ENCODE measurements at regions of chr17 and their contacts with region 1.

Region 1: DNA sequence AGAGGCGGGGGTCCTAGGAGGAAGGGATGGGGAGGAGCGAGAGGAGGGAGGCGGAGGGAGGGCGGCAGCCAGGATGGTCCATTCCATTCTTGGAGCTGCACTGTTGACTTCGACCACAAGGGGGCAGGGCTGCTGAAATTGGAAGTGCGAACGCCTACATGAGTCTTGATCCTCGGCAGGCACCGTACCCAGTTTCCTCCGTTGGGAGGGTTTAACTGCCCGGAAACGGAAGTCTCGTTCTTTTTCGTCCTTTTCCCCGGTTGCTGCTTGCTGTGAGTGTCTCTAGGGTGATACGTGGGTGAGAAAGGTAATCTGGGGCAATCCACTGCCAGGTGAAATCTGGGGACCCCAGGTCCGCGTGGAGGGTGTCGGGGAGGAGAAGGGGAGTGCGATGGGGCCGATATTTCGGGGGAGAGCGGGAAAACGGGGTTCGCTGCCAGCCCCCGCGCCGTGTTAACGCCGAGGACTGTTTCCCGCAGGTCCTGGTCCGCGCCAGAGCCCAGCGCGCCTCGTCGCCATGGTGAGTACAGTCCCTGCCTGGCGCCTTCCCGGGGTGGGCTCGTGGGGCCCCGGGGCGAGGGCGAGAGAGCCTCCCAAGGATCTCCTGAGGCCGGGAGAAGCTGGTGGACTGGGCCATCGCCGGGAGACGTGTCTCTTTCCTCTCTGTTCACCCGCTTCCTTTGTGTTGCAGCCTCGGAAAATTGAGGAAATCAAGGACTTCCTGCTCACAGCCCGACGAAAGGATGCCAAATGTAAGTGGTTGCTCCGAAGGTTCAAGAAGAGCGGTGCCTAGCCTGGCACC is at the start of gene RPL38:
- DNase-seq: peak; percentile 95 to 98 (median 96)
- ATAC-seq: peak; percentile 95
- H3K4me3 ChIP-seq: peak within 1 kb of the TSS; percentile 94 to 97
- H3K27ac ChIP-seq: peak within 1 kb of the TSS; percentile 57 to 85 (median 82)
- H3K4me1 ChIP-seq: peaks cover 46% of the 10 kb centered on the region
- H3K27me3 ChIP-seq: peaks cover 0 to 5% of the 10 kb centered on the region in 2 donors
- CTCF ChIP-seq: peak; percentile 89 to 99 (median 98)
- POLR2A ChIP-seq: peak; percentile 56 to 95 (median 95)
- total RNA-seq, gene RPL38: 141 to 156 TPM

Region 2: GRCh38 chr17:74340470-74341023 is 136.9 kb after region 1 on chr17:
- intact Hi-C with region 1: no loop called
- DNase-seq: no peak
- ATAC-seq: no peak
- H3K4me3 ChIP-seq: no peak overlapping the region
- H3K27ac ChIP-seq: no peak overlapping the region
- H3K4me1 ChIP-seq: no peaks in the 10 kb centered on the region
- H3K27me3 ChIP-seq: no peaks in the 10 kb centered on the region
- CTCF ChIP-seq: no peak
- POLR2A ChIP-seq: no peak

Region 3: GRCh38 chr17:74354123-74354522 is 150.5 kb after region 1 on chr17:
- intact Hi-C with region 1: loop called (anchors 10 kb)
- DNase-seq: peak in 2 of 4 donors; percentile 30 to 44
- ATAC-seq: no peak
- H3K4me3 ChIP-seq: no peak overlapping the region
- H3K27ac ChIP-seq: no peak overlapping the region
- H3K4me1 ChIP-seq: peaks cover 14% of the 10 kb centered on the region
- H3K27me3 ChIP-seq: peaks cover 0 to 20% of the 10 kb centered on the region in 2 donors
- CTCF ChIP-seq: peak in 5 of 7 experiments; percentile 7 to 48 (median 24)
- POLR2A ChIP-seq: no peak